Lower leg skin (tissue), 4 donors: ENCODE measurements at regions of chr1 and their contacts with region 1.

Region 1: DNA sequence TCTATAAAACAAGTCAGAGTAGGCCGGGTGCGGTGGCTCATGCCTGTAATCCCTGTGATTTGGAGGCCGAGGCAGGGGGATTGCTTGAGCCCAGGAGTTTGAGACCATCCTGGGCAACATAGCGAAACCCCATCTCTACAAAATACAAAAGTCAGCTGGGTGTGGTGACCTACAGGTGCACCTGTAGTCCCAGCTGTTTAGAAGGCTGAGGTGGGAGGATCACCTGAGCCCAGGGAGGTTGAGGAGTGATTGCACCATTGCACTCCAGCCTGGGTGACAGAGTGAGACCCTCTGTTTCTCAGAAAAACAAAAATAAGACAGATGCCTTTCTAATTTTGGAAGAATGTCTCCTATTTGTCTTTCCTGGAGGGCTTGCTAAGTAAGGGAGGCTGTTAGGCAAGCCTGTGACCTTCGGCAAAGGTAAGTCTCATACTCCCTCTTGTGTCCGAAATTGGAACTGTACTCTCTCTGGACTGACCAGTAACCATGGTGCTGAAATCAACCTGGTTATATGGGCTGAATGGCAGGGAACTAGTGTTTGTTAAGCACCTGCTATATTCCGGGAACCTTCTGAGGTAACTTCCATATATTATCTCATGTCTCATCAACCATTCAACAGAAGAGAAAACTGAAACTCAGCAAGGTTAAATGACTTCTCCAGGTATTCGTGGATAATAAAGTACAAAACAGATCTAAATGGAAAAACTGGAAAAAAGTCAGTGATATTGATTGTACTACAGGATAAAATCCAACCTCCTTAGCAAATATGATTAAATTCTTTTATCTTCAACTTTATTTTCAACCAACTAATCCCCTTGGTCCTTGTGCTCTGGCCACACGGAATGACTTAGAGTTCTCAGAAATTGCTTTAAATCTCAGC is 11.8 kb upstream of the RAB3B start:
- DNase-seq: peak in 1 of 2 donors; percentile 53
- H3K4me3 ChIP-seq: no peak overlapping the region
- CTCF ChIP-seq: no peak
- POLR2A ChIP-seq: no peak

Region 2: DNA sequence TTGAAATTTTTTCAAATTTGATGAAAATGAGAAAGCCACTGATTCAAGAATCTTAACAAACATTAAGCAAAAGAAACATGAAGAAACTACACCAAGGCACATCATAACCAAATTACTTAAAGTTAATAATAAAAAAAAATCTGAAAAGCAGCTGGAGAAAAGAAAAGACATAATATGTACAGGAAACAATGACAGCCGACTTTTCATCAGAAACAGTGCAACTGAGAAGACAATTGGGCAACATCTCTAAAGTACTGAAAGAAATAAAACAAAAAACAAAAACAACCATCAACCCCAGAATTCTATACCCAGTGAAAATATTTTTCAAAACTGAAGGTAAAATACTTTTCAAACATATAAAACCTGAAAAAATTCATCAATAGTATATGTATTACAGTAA is 1505.3 kb before region 1 on chr1:
- intact Hi-C with region 1: loop called (anchors 5 kb)
- DNase-seq: no peak
- H3K4me3 ChIP-seq: no peak overlapping the region
- CTCF ChIP-seq: no peak
- POLR2A ChIP-seq: no peak

Region 3: GRCh38 chr1:51897699-51898031 is 104.6 kb before region 1 on chr1:
- intact Hi-C with region 1: loop called (anchors 5 kb)
- DNase-seq: no peak
- H3K4me3 ChIP-seq: no peak overlapping the region
- CTCF ChIP-seq: no peak
- POLR2A ChIP-seq: no peak

Region 4: DNA sequence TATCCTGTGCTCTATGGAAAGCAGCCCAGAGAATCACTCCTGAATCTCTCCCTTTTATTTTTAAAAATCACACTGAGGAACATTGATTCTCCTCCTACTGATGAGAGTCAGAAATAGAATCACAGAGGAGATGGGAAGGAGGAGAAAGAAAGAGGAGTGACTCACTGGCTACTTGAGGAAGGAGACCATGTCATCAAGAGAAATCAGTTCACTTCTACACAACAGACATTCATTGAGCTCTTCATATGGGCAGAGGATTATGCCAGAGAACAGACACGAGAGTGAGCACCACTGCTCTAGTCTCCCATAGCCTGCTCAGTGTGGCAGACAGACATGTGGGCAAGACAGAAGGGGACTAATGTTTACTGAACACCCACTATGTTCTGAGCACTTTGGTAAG is 56.0 kb before region 1 on chr1:
- intact Hi-C with region 1: no loop called
- DNase-seq: no peak
- H3K4me3 ChIP-seq: no peak overlapping the region
- CTCF ChIP-seq: no peak
- POLR2A ChIP-seq: no peak